Gastrocnemius medialis (tissue), 4 donors: ENCODE measurements at regions of chr1 and their contacts with region 1.

Region 1: DNA sequence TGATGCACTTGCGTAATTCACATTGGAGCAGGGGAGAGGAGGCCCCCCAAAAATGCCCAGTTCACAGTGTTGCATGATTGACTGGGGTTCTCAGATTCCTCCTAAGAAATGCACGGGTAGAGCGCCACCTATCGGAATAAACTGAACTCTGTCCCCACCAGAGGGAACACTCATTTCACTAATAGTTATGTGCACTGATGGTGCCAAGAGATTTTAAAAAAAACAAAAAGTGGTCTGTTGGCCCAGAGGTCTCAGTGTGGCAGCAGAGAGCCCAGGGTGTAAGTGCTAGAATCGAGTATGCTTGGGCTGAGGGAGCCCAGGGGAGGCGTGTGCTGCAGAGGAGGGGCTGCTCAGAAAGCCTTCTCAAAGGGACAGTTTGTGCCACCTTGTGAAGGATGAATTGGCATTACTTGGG is 6.9 kb downstream of the PINK1 start:
- DNase-seq: no peak
- ATAC-seq: peak in 1 of 2 donors; percentile 48
- H3K4me3 ChIP-seq: no peak overlapping the region
- H3K27ac ChIP-seq: no peak overlapping the region
- H3K4me1 ChIP-seq: peaks cover 8% of the 10 kb centered on the region in 2 donors
- H3K27me3 ChIP-seq: no peaks in the 10 kb centered on the region
- CTCF ChIP-seq: peak; percentile 46 to 81 (median 72)
- POLR2A ChIP-seq: no peak

Region 2: DNA sequence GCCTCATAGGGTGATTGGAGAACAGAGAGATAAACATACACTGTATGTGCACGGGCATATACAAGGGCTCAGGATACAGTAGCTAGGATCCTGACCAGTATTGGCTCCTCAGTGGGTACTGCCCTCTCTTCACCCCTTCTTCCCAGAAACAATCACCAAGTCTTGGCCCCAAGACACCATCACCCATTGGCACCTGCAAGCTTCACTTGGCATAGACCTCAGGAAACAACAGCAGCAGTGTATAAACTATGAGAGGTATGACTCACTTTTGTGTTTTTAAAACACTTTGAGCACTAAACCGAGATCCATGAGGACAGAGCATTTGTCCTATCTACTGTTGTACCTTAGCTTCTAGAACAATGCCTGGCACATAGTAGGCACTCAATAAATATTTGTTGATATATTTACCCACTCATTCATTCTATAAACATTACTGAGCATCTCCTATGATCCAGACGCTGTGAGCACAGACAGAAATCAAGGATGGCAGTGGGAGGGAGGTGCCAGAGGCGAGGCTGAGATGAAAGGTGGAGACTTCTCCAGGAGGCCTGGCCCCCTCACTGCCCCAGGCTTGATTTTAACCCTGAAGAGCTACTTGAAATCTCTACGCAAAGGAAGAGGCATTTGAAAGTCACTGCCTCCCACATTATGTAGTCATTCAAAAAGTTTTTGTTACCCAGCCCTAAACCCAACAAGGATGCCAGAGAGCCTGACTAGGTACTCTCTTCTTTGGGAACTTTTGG is 249.4 kb before region 1 on chr1:
- in situ Hi-C with region 1: no loop called
- intact Hi-C with region 1: no loop called
- DNase-seq: no peak
- ATAC-seq: no peak
- H3K4me3 ChIP-seq: no peak overlapping the region
- H3K27ac ChIP-seq: no peak overlapping the region
- H3K4me1 ChIP-seq: no peaks in the 10 kb centered on the region
- H3K27me3 ChIP-seq: peaks cover 8 to 11% (median 9%) of the 10 kb centered on the region in 3 donors
- CTCF ChIP-seq: no peak
- POLR2A ChIP-seq: no peak

Region 3: DNA sequence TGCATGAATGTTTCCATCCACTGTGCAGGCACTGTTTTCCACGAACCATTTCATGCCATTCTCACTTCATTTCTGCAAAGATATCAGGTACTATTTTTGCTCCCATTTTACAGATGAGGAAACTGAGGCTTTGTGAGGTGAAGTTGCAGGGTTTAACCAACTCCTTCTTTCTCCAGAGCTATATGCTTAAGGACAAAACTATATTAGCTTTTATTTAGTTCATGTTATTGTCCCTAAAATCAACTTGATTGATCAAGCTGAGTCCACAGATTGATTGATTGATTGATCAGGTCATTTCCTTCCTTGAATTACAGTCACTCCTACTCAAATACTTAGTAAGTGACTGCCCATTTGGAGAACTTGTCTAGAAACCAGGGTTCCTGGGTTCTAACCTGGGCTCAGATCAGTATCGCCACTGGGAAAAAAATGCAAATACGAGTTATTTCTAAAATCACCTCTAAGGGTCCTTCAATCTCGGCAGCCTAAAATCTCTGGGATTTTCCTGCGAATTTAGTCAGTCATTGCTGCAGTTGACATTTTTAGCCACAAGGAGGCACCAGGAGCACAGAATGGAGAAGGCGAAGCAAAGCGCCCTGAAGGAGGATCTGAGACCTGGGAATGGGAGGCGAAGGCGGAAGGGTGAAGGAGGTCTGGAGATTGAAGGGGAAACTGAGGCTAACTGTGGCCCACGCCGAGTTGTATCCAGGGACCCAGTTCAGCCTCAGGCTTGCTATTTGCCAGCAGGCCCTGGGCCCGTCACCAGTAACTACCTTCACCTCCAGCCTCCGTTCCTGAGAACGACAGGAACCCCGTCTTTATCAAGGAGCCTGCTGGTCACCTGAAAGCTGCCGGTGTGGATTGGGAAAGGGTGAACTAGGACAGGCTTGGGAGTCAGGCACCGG is 118.0 kb before region 1 on chr1:
- in situ Hi-C with region 1: loop called in 3 of 4 experiments (anchors 5 kb)
- intact Hi-C with region 1: loop called (anchors 1 kb)
- DNase-seq: peak; percentile 29 to 47
- ATAC-seq: peak; percentile 79 to 82
- H3K4me3 ChIP-seq: no peak overlapping the region
- H3K27ac ChIP-seq: no peak overlapping the region
- H3K4me1 ChIP-seq: no peaks in the 10 kb centered on the region
- H3K27me3 ChIP-seq: no peaks in the 10 kb centered on the region
- CTCF ChIP-seq: peak; percentile 77 to 89 (median 88)
- POLR2A ChIP-seq: no peak

Region 4: DNA sequence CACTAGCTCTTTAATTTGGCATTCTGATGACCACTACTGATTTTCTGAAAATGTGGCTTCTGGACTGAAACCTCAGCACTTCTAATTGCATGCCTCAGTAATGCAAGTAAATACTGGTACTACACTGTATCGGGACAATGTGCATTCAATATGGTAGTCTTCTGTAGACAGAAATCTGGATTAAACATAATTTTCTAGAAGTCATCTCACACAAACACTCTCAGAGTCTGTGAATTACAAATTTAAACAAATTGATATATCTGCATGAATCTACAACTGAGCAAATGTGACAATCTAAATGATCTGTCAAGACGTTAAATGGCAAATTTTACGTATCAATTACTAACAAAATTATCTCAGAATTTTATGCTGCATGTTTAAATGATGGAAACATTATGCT is 123.2 kb after region 1 on chr1:
- in situ Hi-C with region 1: no loop called
- intact Hi-C with region 1: no loop called
- DNase-seq: no peak
- ATAC-seq: no peak
- H3K4me3 ChIP-seq: no peak overlapping the region
- H3K27ac ChIP-seq: no peak overlapping the region
- H3K4me1 ChIP-seq: peaks cover 15 to 17% of the 10 kb centered on the region in 2 donors
- H3K27me3 ChIP-seq: no peaks in the 10 kb centered on the region
- CTCF ChIP-seq: no peak
- POLR2A ChIP-seq: no peak